Head of caudate nucleus (tissue), 42 donors: ENCODE measurements at regions of chr9 and their contacts with region 1.

Region 1: DNA sequence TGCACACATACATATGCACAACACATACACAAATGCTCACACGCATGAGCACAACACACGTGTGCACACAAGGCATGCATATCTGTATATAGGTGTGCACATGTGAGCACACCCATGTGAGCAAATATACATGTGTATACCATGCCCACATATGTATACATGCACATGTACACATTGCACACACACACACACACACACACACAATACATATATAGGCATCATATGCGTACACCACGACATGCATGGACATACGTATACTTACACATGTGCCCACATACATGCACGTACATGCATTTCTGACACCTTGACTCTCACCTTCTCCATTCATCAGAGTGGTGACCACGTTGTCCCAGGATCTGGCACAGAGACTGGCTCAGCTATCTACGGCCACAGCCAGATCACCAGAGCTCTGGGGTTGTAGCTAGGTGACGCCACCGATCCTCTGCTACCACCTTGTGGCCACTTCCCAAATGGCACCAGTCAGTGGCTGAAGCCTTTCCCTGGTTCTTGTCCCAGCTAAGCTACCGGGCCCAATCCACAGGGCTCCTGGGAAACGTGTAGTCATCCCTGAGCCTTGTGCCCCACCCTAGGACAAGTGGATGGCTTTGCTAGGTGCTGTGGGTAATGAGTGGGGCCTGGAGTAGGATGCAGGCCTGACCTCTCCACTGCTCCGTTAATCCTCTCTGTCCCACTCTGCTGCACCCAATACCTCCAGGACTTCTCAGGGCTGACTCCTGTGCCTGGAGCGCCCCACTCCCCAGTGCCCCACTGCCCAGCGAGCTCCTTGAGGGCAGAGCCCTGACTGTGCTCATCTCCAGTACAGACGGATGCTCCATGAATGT is 194.4 kb downstream of the RGS3 start:
- DNase-seq: peak; percentile 69 to 95 (median 88)

Region 2: GRCh38 chr9:113275157-113276131 is 382.5 kb before region 1 on chr9 and contains the starts of genes CDC26 and PRPF4:
- intact Hi-C with region 1: loop called (anchors 10 kb)
- DNase-seq: peak; percentile 92 to 99 (median 98)

Region 3: DNA sequence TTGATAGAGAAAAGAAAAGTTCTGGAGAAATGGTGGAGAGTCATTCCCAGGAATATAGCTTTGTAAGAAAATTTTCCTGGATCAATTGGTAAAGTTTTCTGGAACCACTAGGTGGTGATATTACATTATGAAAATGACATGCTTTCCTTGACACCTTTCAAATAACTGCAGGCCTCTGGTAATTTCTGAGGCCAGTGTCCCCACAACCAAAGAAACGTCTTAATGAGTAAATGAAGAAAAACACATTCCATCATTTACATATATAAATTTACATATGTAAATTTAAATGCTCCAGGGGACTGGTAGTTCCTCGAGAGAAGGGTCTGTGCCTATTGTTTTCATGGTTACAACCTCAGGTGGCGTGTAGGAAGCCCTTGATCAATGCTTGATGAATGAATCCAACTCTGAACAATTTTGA is 211.6 kb before region 1 on chr9:
- intact Hi-C with region 1: loop called (anchors 5 kb)
- DNase-seq: peak in 4 of 42 donors; percentile 15 to 41 (median 21)

Region 4: DNA sequence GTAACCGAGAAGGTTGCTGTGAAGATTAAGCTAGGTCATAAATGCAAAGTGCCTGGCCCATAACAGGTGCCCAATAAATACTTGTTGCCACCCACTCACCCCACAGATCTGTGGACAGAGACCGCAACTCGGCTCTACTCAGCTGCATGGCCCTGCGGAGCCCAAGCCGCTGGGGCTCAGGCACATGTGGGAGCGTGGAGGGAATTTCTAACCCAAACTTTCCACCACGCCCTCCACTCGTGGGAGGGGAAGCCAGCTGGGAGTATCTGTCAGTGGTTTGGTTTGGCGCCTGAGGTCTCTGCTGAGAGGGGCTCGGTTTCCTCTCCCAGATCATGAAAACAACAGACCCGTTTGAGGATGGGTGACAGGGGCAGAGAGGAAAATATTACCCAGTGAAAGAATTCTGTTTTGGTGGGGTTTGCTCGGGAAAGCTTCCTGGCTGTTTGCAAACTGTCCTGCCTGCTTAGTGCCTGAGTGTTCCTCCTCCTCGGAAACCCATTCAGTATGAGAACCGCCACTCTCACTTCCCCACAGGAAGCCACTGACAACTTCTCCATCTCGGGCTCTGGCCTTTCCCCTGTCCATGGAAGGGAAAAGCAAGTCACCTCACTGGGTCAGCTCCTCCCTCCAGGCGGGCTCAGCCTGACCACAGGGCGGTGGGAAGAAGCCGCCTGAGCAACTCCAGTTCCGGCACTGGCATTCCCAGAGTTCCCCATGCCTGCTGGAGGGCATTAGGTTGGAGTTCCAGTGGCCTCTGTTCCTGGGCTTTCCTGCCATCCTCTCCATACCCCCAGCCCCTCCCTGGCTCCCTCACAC is 134.3 kb before region 1 on chr9:
- intact Hi-C with region 1: no loop called
- DNase-seq: peak in 15 of 42 donors; percentile 18 to 59 (median 43)

Region 5: DNA sequence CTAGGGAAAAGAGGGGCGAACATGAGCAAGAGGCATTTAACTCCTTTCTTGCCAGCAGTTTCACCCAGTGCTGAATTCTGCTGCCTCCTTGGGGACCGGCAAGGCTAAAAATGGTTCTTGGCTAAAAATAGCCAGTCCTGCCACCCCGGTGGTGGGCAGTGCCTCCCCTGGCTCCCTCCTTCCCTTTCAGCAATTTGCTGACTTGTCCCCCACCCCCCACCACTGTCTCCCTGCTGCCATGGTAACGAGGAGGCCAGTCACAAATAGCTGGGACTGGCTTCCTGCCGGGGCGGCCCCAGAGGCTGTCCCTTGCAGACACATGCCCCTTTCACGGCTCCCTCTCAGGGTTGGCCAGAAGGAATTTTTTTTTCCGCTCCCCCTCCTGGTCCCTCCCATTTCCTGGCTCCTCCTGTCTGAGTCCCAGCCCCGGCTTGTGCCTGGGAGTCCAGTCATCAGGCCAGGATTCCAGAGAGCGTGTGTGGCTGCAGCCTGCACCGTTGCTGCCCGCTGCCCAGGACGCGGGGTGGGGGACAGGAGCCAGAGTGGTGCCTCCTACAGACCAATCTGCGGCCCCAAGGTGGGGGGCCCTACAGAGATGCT is 64.1 kb before region 1 on chr9:
- intact Hi-C with region 1: loop called (anchors 2 kb)
- DNase-seq: peak; percentile 61 to 93 (median 81)

Region 6: GRCh38 chr9:113955076-113955752 is 297.3 kb after region 1 on chr9:
- intact Hi-C with region 1: no loop called
- DNase-seq: peak in 1 of 42 donors; percentile 1

Region 7: GRCh38 chr9:114027159-114027895 is 369.4 kb after region 1 on chr9:
- intact Hi-C with region 1: no loop called
- DNase-seq: peak in 1 of 42 donors; percentile 33